GM10248 (cell line): ENCODE measurements at regions of chr6 and their contacts with region 1.

Region 1: GRCh38 chr6:70107852-70108629 is 194.8 kb downstream of the COL9A1 start:
- DNase-seq: peak; percentile 26
- CTCF ChIP-seq: peak; percentile 63

Region 2: DNA sequence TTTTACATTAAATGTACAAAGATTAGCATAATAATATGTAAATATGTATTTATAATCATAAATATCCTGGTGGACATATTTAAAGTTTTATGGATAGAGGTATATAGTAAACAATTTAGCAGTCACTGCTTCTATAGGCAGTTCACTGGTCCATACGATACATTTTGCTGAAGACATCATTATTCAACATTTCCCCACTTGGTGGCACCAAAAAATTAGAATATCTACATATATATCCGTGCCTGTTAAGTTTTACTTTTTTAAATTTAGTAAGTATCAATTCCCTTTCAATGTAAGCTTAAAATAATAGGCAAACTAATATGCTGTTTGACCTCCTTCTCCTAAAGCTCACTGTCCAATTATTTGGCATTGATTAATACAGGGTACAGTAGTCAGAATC is 375.4 kb before region 1 on chr6:
- CTCF ChIA-PET with region 1: interaction called, 11 read pairs
- POLR2A ChIA-PET with region 1: no interaction called
- DNase-seq: no peak
- CTCF ChIP-seq: peak; percentile 12

Region 3: DNA sequence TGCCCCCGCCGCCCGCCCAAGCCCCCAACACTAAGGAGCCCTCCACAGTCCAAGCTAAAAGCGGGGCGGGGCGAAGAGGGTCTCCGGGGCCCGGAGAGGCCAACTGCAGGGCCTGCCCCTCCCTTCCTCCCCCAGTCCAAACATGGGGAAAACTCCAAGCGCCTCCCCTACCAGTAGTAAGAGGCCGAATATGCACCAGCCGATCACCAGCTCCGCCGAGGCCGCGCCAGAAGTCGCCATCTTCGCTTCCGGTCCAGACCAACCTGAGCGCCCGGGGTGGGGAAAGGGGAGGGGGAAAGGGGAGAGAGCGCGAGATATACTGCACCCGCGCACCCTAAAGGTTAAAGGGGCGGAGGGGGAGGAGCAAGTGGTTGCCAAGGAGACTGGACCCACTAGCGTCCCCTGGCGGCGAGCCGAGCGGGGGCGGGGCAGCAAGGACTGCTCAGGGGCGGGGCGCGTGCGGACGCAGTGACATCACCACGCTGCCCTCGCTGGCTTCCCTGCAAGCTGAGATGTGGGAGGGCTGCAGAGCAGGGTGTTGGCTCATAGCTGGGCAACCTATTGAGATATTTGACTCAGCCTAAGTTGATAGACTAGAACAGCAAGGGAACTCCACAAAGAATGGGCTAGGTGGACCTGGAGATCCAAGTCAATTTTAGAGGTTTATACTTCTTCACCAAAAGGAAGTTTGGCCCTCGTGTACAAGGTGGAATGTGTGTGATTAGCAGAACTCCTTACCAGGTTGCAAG is 311.2 kb before region 1 on chr6 and contains the start of gene LMBRD1:
- CTCF ChIA-PET with region 1: interaction called, 18 read pairs
- POLR2A ChIA-PET with region 1: no interaction called
- DNase-seq: peak; percentile 95
- CTCF ChIP-seq: peak; percentile 94

Region 4: GRCh38 chr6:69835414-69836179 is 272.4 kb before region 1 on chr6:
- CTCF ChIA-PET with region 1: interaction called, 17 read pairs
- POLR2A ChIA-PET with region 1: no interaction called
- DNase-seq: peak; percentile 23
- CTCF ChIP-seq: peak; percentile 88

Region 5: GRCh38 chr6:70094156-70094555 is 13.9 kb before region 1 on chr6:
- CTCF ChIA-PET with region 1: interaction called, 23 read pairs
- POLR2A ChIA-PET with region 1: no interaction called
- DNase-seq: no peak
- CTCF ChIP-seq: no peak

Region 6: DNA sequence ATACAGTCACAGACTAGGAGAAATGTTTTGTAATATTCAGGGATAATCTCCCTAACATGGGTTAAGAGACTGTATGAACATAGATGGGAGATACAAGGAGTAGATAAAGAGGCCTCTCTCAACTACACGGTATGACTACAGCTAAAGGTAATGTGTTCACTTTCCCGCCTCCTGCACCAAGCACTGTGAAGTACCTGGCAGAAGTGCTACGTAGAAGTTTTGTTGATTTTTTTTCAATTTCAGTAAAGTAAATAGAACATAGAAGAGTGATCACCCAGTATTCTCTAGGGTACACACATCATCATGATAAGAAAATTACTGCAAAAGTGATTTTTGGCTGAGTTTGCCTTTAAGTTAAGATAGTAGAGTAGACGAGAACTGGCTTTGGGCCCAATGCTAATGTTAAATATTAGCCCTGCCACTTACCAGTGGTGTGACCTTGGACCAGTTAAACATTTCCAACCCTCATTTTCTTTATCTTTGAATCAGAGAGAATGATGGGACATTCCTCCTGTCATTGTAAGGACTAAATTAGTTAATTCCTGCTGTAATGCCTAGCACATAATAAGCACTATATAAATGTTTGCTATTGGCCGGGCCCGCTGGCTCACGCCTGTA is 11.3 kb after region 1 on chr6:
- CTCF ChIA-PET with region 1: interaction called, 27 read pairs
- POLR2A ChIA-PET with region 1: no interaction called
- DNase-seq: no peak
- CTCF ChIP-seq: no peak

Region 7: DNA sequence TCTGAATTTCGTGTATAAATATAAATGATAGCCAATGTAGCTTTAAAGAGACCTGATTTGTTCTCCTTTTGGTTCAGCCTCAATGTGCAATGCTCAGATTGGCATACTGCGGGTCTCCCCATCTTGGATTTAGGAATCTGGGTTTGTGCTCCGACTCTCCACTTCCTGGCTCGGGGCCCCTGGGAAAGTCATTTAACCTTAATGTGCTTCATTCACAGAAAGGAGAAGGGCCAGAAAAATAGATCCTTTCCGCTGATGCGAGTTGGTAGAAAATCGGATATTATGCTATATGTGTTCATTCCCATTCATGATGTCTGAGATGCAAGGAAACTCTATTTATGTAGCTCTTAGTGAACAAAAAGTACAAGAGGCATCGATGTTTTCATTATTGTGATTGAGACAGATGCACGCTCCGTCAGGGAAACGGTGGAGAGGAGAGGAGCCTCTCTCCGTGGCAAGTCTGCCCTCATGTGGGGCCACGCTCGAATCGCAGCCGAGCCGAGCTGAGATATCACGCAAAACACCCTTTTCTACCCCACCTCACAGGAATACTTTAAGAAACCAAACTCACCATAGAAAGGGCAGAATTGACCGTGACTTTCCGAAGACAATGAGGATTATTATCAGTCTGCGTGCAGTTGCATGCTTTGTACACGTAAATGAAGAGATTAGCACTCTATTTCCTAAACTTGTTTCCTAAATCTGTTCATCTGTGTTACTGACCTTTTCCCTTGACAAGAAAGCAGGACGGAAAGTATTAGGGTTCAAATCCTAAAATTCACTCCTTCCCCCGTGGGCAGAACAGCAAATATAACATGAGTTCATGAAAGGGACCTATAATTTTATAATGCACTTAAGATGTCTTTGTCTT is 58.3 kb after region 1 on chr6:
- CTCF ChIA-PET with region 1: interaction called, 12 read pairs
- POLR2A ChIA-PET with region 1: no interaction called
- DNase-seq: peak; percentile 50
- CTCF ChIP-seq: peak; percentile 70